ENCODE measurements at regions of chr1 and their contacts with region 1.

Region 1: DNA sequence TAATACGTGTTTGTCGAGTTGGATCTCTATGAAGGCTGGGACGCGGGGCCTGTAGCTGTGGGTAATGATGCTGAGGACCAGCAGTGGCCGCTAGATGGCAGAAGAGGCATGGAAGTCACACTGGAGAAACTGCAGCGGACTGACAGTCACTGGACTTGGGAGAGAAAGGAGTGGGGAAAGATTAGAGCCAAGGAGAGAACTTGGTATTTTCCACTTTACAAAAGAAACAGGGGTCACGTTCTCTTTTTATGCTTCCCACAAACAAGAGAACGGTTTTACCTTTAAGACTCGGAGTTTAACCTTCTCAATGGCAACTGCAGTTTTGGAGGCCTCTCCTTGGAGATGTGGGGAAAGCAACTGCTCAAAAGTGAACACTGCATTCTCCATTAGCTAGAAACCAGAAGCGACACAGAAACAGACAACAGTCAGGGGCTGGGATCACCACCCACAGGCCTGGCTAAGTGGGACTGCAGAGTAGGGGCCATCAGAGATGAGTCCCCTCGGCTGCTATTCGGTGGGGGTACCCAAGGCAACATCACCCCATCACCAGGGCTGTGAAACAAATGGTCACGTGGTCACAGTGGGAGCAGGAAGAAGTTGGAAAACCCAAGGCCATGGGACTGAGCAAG is 51.1 kb upstream of the EDEM3 start:
- DNase-seq: peak; percentile 76 to 83
- ATAC-seq: peak; percentile 98 to 100
- H3K4me3 ChIP-seq: no peak overlapping the region
- H3K27ac ChIP-seq: 0 out of 6 replicates have a peak overlapping the region, but pooled peaks of 1 of the 2 experiments have one; percentile 22
- H3K4me1 ChIP-seq: no peaks in the 10 kb centered on the region
- CTCF ChIP-seq: peak; percentile 87
- EP300 ChIP-seq: no peak
- POLR2A ChIP-seq: no peak
- RAD21 ChIP-seq: peak; percentile 96 to 98

Region 2: GRCh38 chr1:184788970-184789369 is 16.8 kb before region 1 on chr1:
- CTCF ChIA-PET with region 1: interaction called, 54 read pairs
- POLR2A ChIA-PET with region 1: no interaction called
- DNase-seq: no peak
- ATAC-seq: no peak
- H3K4me3 ChIP-seq: no peak overlapping the region
- H3K27ac ChIP-seq: peak overlapping the region in 1 of 2 experiments; percentile 58; a peak in 3 of 6 replicates
- H3K4me1 ChIP-seq: peaks cover 41% of the 10 kb centered on the region
- CTCF ChIP-seq: no peak
- EP300 ChIP-seq: no peak
- POLR2A ChIP-seq: no peak
- RAD21 ChIP-seq: no peak

Region 3: GRCh38 chr1:184827600-184828368 is 22.0 kb after region 1 on chr1:
- CTCF ChIA-PET with region 1: interaction called, 49 read pairs
- POLR2A ChIA-PET with region 1: no interaction called
- DNase-seq: no peak
- ATAC-seq: peak; percentile 39 to 70; a peak in 3 of 6 replicates
- H3K4me3 ChIP-seq: no peak overlapping the region
- H3K27ac ChIP-seq: no peak overlapping the region
- H3K4me1 ChIP-seq: peaks cover 9% of the 10 kb centered on the region
- CTCF ChIP-seq: no peak
- EP300 ChIP-seq: no peak
- POLR2A ChIP-seq: no peak
- RAD21 ChIP-seq: no peak

Region 4: GRCh38 chr1:184982002-184982954 is 176.5 kb after region 1 on chr1:
- CTCF ChIA-PET with region 1: interaction called, 222 read pairs
- POLR2A ChIA-PET with region 1: no interaction called
- DNase-seq: peak; percentile 32 to 71
- ATAC-seq: peak; percentile 98 to 99
- H3K4me3 ChIP-seq: no peak overlapping the region
- H3K27ac ChIP-seq: no peak overlapping the region
- H3K4me1 ChIP-seq: no peaks in the 10 kb centered on the region
- CTCF ChIP-seq: peak; percentile 89
- EP300 ChIP-seq: no peak
- POLR2A ChIP-seq: no peak
- RAD21 ChIP-seq: peak; percentile 84 to 86

Region 5: DNA sequence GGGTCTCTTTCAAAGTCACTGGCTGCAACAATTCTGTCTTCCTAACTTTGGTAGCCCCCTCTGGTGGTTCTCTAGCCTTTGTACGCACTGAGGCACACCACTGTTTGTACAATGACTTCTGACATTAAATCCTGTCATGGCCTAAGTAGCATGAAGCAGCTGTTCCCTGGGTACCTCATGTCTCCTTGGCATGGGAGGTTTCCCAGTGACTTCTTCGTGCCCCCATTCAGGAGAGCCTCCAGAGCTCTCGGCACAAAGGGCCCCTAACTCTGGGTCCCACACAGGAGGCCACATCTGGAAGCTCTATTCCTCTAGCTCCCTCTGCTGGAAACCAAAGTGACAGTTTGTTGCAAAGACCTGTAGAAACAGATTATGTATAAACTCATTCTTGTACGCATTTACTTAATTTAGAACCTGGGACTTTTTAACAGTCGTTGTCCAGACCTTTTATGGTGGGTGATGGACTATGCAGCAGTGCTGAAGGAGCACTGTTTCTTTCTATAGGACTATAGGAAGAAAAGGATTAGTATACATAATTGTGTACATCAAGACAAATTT is 364.6 kb after region 1 on chr1:
- CTCF ChIA-PET with region 1: interaction called, 43 read pairs
- POLR2A ChIA-PET with region 1: no interaction called
- DNase-seq: peak; percentile 36 to 60
- ATAC-seq: peak; percentile 95 to 97
- H3K4me3 ChIP-seq: no peak overlapping the region
- H3K27ac ChIP-seq: no peak overlapping the region
- H3K4me1 ChIP-seq: no peaks in the 10 kb centered on the region
- CTCF ChIP-seq: peak; percentile 84
- EP300 ChIP-seq: no peak
- POLR2A ChIP-seq: no peak
- RAD21 ChIP-seq: peak; percentile 68 to 71